IMR-90 (cell line): ENCODE measurements at regions of chr5 and their contacts with region 1.

Region 1: GRCh38 chr5:98768160-98769005 is 5.1 kb upstream of the RGMB start:
- DNase-seq: peak; percentile 73
- ATAC-seq: peak; percentile 33
- H3K4me3 ChIP-seq: peak overlapping the region; percentile 81
- H3K27ac ChIP-seq: peak overlapping the region; percentile 85
- H3K4me1 ChIP-seq: peaks cover 6% of the 10 kb centered on the region; the same call in 1 of the 2 replicates
- H3K27me3 ChIP-seq: no peaks in the 10 kb centered on the region
- CTCF ChIP-seq: peak; percentile 88
- POLR2A ChIP-seq: peak; percentile 59; the same call in 1 of the 2 replicates
- RAD21 ChIP-seq: peak; percentile 90

Region 2: GRCh38 chr5:97231025-97231636 is 1537.3 kb before region 1 on chr5:
- CTCF ChIA-PET with region 1: no interaction called
- POLR2A ChIA-PET with region 1: interaction called, 3 read pairs
- dilution Hi-C with region 1: no loop called
- in situ Hi-C with region 1: no loop called
- intact Hi-C with region 1: loop called (anchors 1 kb)
- DNase-seq: peak; percentile 86
- ATAC-seq: peak; percentile 87
- H3K4me3 ChIP-seq: no peak overlapping the region
- H3K27ac ChIP-seq: no peak overlapping the region
- H3K4me1 ChIP-seq: no peaks in the 10 kb centered on the region
- H3K27me3 ChIP-seq: no peaks in the 10 kb centered on the region
- CTCF ChIP-seq: peak; percentile 79
- POLR2A ChIP-seq: no peak
- RAD21 ChIP-seq: peak; percentile 77

Region 3: DNA sequence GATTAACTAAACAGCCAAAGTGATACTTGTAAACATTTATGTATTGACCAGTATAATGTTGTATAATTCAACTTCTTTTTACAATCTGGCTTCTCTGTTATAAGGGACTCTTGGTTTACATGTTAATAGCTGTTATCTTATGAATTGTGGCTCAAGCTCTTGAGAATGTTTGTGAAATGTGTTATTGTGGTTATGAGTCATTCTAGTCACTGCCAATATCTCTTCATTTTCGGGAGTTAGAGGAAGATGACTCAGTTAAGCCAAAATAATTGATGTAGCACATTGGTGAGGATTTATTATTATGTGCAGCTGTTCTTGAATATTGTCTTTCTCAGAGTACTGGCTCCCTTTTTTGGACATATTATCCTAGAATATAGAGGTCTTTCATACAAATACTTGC is 930.2 kb before region 1 on chr5:
- CTCF ChIA-PET with region 1: no interaction called
- POLR2A ChIA-PET with region 1: no interaction called
- dilution Hi-C with region 1: no loop called
- in situ Hi-C with region 1: no loop called
- intact Hi-C with region 1: loop called (anchors 2 kb)
- DNase-seq: peak; percentile 99
- ATAC-seq: peak; percentile 89
- H3K4me3 ChIP-seq: no peak overlapping the region
- H3K27ac ChIP-seq: no peak overlapping the region
- H3K4me1 ChIP-seq: peaks cover 3% of the 10 kb centered on the region
- H3K27me3 ChIP-seq: peaks cover 5% of the 10 kb centered on the region
- CTCF ChIP-seq: no peak
- POLR2A ChIP-seq: no peak
- RAD21 ChIP-seq: no peak

Region 4: GRCh38 chr5:98248949-98249348 is 519.4 kb before region 1 on chr5:
- CTCF ChIA-PET with region 1: no interaction called
- POLR2A ChIA-PET with region 1: no interaction called
- dilution Hi-C with region 1: no loop called
- in situ Hi-C with region 1: no loop called
- intact Hi-C with region 1: loop called (anchors 10 kb)
- DNase-seq: peak; percentile 96
- ATAC-seq: peak; percentile 97
- H3K4me3 ChIP-seq: no peak overlapping the region
- H3K27ac ChIP-seq: no peak overlapping the region
- H3K4me1 ChIP-seq: 0 out of 2 replicates have a peak, but pooled peaks cover 2% of the 10 kb centered on the region
- H3K27me3 ChIP-seq: no peaks in the 10 kb centered on the region
- CTCF ChIP-seq: no peak
- POLR2A ChIP-seq: no peak
- RAD21 ChIP-seq: no peak

Region 5: GRCh38 chr5:98349251-98349995 is 419.0 kb before region 1 on chr5:
- CTCF ChIA-PET with region 1: interaction called, 7 read pairs
- POLR2A ChIA-PET with region 1: no interaction called
- dilution Hi-C with region 1: no loop called
- in situ Hi-C with region 1: loop called (anchors 10 kb)
- intact Hi-C with region 1: loop called (anchors 1 kb)
- DNase-seq: peak; percentile 86
- ATAC-seq: peak; percentile 84
- H3K4me3 ChIP-seq: no peak overlapping the region; the same call in 1 of the 2 replicates
- H3K27ac ChIP-seq: peak overlapping the region; percentile 66
- H3K4me1 ChIP-seq: peaks cover 4% of the 10 kb centered on the region; the same call in 1 of the 2 replicates
- H3K27me3 ChIP-seq: no peaks in the 10 kb centered on the region
- CTCF ChIP-seq: peak; percentile 83
- POLR2A ChIP-seq: peak; percentile 47
- RAD21 ChIP-seq: peak; percentile 95

Region 6: GRCh38 chr5:98454904-98455303 is 313.5 kb before region 1 on chr5:
- CTCF ChIA-PET with region 1: interaction called, 7 read pairs
- POLR2A ChIA-PET with region 1: interaction called, 8 read pairs
- dilution Hi-C with region 1: no loop called
- in situ Hi-C with region 1: loop called (anchors 10 kb)
- intact Hi-C with region 1: loop called (anchors 1 kb)
- DNase-seq: peak; percentile 97
- ATAC-seq: peak; percentile 69
- H3K4me3 ChIP-seq: peak overlapping the region; percentile 23; the same call in 1 of the 2 replicates
- H3K27ac ChIP-seq: peak overlapping the region; percentile 38; the same call in 1 of the 2 replicates
- H3K4me1 ChIP-seq: peaks cover 8% of the 10 kb centered on the region
- H3K27me3 ChIP-seq: no peaks in the 10 kb centered on the region
- CTCF ChIP-seq: peak; percentile 44
- POLR2A ChIP-seq: no peak
- RAD21 ChIP-seq: peak; percentile 62

Region 7: GRCh38 chr5:98816582-98817222 is 48.3 kb after region 1 on chr5:
- CTCF ChIA-PET with region 1: no interaction called
- POLR2A ChIA-PET with region 1: no interaction called
- dilution Hi-C with region 1: no loop called
- in situ Hi-C with region 1: no loop called
- intact Hi-C with region 1: no loop called
- DNase-seq: no peak
- ATAC-seq: no peak
- H3K4me3 ChIP-seq: no peak overlapping the region
- H3K27ac ChIP-seq: no peak overlapping the region
- H3K4me1 ChIP-seq: no peaks in the 10 kb centered on the region
- H3K27me3 ChIP-seq: no peaks in the 10 kb centered on the region
- CTCF ChIP-seq: no peak
- POLR2A ChIP-seq: no peak
- RAD21 ChIP-seq: no peak

Region 8: GRCh38 chr5:98865690-98866089 is 97.3 kb after region 1 on chr5:
- CTCF ChIA-PET with region 1: no interaction called
- POLR2A ChIA-PET with region 1: no interaction called
- dilution Hi-C with region 1: no loop called
- in situ Hi-C with region 1: no loop called
- intact Hi-C with region 1: no loop called
- DNase-seq: no peak
- ATAC-seq: no peak
- H3K4me3 ChIP-seq: no peak overlapping the region
- H3K27ac ChIP-seq: no peak overlapping the region
- H3K4me1 ChIP-seq: no peaks in the 10 kb centered on the region
- H3K27me3 ChIP-seq: no peaks in the 10 kb centered on the region
- CTCF ChIP-seq: no peak
- POLR2A ChIP-seq: no peak
- RAD21 ChIP-seq: no peak